Activated T-helper 2 cell treated with anti-CD3 and anti-CD28 coated beads, Interferon-gamma antibody, Interleukin-2, Interleukin-4, amounts not matched to agents 10 μg/mL and 5 μg/mL and 100 μg/mL, durations not matched to agents 14 hours and 24 hours and 36 hours (primary cell): ENCODE measurements at regions of chr17 and their contacts with region 1.

Region 1: DNA sequence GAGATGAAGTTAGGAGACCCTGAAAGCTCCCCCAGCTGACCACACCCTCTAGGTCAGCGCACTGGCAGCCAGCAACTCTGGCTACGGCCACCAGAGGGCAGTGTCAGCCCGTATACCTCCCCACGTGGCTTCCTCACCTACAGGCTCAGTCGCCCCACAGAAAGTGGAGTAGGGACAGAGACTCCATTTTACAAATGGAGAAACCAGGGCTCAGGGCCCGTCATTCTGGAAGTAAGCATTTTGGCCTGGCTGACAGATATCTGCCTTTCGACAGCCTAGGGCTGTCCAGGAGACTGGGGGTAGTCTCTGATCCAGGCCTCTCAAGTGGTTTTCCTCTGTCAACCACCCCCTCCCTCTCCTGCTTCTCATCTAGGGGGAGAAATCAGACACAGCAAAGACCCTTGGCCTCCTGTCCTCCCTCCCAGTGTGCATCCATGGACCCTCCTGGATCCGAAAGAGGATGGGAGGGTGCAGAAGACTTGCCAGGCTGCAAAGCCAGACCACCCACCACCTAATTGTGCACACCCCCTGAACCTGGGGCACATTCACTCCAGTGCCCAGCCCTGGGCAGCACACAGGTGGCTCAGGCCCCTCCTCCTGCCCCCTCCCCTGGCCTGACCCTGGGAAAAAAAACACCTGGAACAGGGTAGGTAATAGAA is 3.8 kb upstream of the HAP1 start:
- DNase-seq: peak; percentile 74
- H3K4me3 Mint-ChIP-seq: no peak overlapping the region
- H3K27ac Mint-ChIP-seq: no peak overlapping the region
- H3K4me1 Mint-ChIP-seq: peaks cover 6% of the 10 kb centered on the region
- H3K27me3 Mint-ChIP-seq: peaks cover 30% of the 10 kb centered on the region

Region 2: DNA sequence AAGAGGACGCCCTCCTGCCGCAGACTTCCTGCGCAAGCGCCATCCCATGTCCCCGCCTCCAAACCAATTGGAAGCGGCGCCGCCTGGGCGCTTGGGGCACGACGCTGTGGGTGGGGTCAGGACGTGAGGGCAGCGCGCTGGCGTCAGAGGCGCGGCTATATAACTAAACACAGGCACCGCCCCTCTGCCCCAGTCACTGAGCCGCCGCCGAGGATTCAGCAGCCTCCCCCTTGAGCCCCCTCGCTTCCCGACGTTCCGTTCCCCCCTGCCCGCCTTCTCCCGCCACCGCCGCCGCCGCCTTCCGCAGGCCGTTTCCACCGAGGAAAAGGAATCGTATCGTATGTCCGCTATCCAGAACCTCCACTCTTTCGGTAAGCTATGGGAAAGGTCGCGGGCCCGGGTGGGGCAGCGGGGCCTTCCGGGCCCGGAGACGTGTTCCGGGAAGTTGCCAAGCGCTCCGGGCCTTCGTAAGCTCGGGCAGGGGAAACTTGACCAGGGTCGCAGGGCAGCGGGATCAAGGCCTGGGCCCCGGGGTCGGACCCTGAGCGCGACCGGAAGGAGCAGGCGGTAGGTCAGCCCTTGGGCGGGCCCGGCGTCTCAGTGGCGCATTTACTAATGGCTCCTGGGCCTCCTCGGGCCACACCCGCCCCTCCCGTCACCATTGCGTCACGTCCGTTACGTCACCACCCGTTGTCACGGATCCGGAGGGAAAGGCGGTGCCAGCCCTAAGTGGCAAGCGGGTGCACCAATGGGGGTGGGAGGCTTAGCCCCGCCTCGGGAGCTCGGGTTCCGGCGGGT is 49.3 kb before region 1 on chr17 and contains the start of gene EIF1:
- intact Hi-C with region 1: no loop called
- DNase-seq: peak; percentile 99
- H3K4me3 Mint-ChIP-seq: peak within 1 kb of the TSS; percentile 96
- H3K27ac Mint-ChIP-seq: peak within 1 kb of the TSS; percentile 98
- H3K4me1 Mint-ChIP-seq: peaks cover 15% of the 10 kb centered on the region
- H3K27me3 Mint-ChIP-seq: no peaks in the 10 kb centered on the region
- total RNA-seq, gene EIF1: 779 and 785 TPM in 2 replicates

Region 3: GRCh38 chr17:41768682-41769288 is 30.6 kb after region 1 on chr17:
- intact Hi-C with region 1: no loop called
- DNase-seq: no peak
- H3K4me3 Mint-ChIP-seq: no peak overlapping the region
- H3K27ac Mint-ChIP-seq: no peak overlapping the region
- H3K4me1 Mint-ChIP-seq: no peaks in the 10 kb centered on the region
- H3K27me3 Mint-ChIP-seq: no peaks in the 10 kb centered on the region

Region 4: GRCh38 chr17:41801374-41802271 is 63.4 kb after region 1 on chr17:
- intact Hi-C with region 1: loop called (anchors 1 kb)
- DNase-seq: peak; percentile 53
- H3K4me3 Mint-ChIP-seq: no peak overlapping the region
- H3K27ac Mint-ChIP-seq: peak overlapping the region; percentile 11
- H3K4me1 Mint-ChIP-seq: peaks cover 8% of the 10 kb centered on the region
- H3K27me3 Mint-ChIP-seq: no peaks in the 10 kb centered on the region

Region 5: DNA sequence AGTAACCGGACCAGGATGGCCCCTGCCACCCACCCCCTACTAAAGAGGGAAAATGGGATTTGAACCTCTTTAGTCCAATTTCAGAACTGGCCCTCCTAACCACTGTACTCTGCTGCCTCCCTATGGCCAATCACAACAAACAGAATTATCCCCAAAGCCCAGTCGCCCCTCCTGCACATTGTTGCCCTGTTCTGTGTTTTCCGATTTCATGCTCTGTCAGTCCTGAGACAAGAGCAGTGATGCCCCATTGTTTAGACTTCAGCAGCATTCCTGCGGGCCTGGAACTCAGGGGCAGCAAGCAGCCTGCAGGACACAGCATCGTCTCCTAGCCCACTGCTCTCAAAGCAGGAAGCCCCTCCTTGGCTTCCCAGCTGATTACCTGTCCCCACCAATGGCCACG is 147.5 kb after region 1 on chr17:
- intact Hi-C with region 1: loop called (anchors 1 kb)
- DNase-seq: no peak
- H3K4me3 Mint-ChIP-seq: no peak overlapping the region
- H3K27ac Mint-ChIP-seq: no peak overlapping the region
- H3K4me1 Mint-ChIP-seq: peaks cover 3% of the 10 kb centered on the region
- H3K27me3 Mint-ChIP-seq: no peaks in the 10 kb centered on the region